Posterior vena cava (tissue), 2 donors: ENCODE measurements at regions of chr5 and their contacts with region 1.

Region 1: DNA sequence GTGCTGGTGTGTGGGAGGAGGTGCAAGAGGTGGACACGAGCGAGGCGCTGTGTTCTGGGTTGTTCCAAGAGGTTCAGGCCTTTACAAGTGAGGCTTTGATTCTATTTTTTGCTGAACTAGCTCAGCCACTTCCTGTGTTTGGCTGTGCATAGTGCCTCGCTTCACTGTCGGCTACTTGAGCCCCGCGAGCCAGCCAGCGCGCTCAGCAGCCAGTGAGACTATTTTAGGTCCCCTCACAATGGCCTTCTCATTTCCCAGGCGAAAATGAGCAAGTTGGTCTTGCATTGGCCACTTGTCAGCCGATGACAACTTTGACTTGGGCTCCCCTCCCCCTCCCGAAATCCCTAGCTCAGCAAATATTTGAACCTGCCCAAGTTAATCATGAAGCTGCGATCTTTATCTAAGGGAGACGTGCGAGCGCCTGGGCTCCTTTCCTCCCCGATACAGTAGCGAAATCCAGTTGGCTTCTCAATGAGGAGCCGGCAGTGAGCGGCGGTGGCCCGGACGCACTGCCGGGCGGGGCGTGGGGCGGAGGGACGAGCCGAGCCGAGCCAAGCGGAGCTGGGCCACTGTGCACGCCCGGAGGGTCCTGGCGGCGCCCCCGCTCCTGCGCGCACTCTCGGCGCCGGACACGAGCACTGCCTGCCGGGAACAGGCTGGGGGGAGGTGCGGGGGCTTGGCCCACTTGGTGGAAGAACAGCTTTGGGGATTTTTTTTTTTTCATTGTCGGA is 72.6 kb downstream of the PIK3R1 start:
- DNase-seq: peak; percentile 87

Region 2: GRCh38 chr5:68456756-68457217 is 168.6 kb after region 1 on chr5:
- intact Hi-C with region 1: loop called (anchors 5 kb)
- DNase-seq: no peak

Region 3: GRCh38 chr5:68673106-68673822 is 385.1 kb after region 1 on chr5:
- intact Hi-C with region 1: loop called in 1 of 2 experiments (anchors 10 kb)
- DNase-seq: no peak

Region 4: GRCh38 chr5:68962757-68963484 is 674.8 kb after region 1 on chr5:
- intact Hi-C with region 1: loop called in 1 of 2 experiments (anchors 2 kb)
- DNase-seq: peak; percentile 83